Transverse colon (tissue), 4 donors: ENCODE measurements at regions of chr2 and their contacts with region 1.

Region 1: GRCh38 chr2:201470821-201471731 is 19.5 kb downstream of the STRADB start:
- DNase-seq: no peak
- H3K4me3 ChIP-seq: no peak overlapping the region
- H3K27ac ChIP-seq: no peak overlapping the region
- H3K4me1 ChIP-seq: peaks cover 0 to 21% (median 8%) of the 10 kb centered on the region in 4 donors
- H3K27me3 ChIP-seq: no peaks in the 10 kb centered on the region
- CTCF ChIP-seq: no peak
- EP300 ChIP-seq: no peak
- POLR2A ChIP-seq: no peak

Region 2: GRCh38 chr2:200901459-200902072 is 569.5 kb before region 1 on chr2:
- in situ Hi-C with region 1: no loop called
- intact Hi-C with region 1: no loop called
- DNase-seq: peak; percentile 67
- H3K4me3 ChIP-seq: no peak overlapping the region
- H3K27ac ChIP-seq: no peak overlapping the region
- H3K4me1 ChIP-seq: no peaks in the 10 kb centered on the region
- H3K27me3 ChIP-seq: no peaks in the 10 kb centered on the region
- CTCF ChIP-seq: peak; percentile 58 to 89 (median 80)
- EP300 ChIP-seq: no peak
- POLR2A ChIP-seq: no peak

Region 3: GRCh38 chr2:201275990-201276389 is 195.1 kb before region 1 on chr2:
- in situ Hi-C with region 1: no loop called
- intact Hi-C with region 1: loop called (anchors 10 kb)
- DNase-seq: no peak
- H3K4me3 ChIP-seq: no peak overlapping the region
- H3K27ac ChIP-seq: no peak overlapping the region
- H3K4me1 ChIP-seq: peaks cover 0 to 4% (median 0%) of the 10 kb centered on the region in 4 donors
- H3K27me3 ChIP-seq: no peaks in the 10 kb centered on the region
- CTCF ChIP-seq: no peak
- EP300 ChIP-seq: no peak
- POLR2A ChIP-seq: no peak

Region 4: GRCh38 chr2:201839727-201840126 is 368.7 kb after region 1 on chr2:
- in situ Hi-C with region 1: no loop called
- intact Hi-C with region 1: no loop called
- DNase-seq: no peak
- H3K4me3 ChIP-seq: no peak overlapping the region
- H3K27ac ChIP-seq: no peak overlapping the region
- H3K4me1 ChIP-seq: no peaks in the 10 kb centered on the region
- H3K27me3 ChIP-seq: no peaks in the 10 kb centered on the region
- CTCF ChIP-seq: no peak
- EP300 ChIP-seq: no peak
- POLR2A ChIP-seq: no peak